Naive thymus-derived CD4-positive, alpha-beta T cell (primary cell): ENCODE measurements at regions of chr14 and their contacts with region 1.

Region 1: DNA sequence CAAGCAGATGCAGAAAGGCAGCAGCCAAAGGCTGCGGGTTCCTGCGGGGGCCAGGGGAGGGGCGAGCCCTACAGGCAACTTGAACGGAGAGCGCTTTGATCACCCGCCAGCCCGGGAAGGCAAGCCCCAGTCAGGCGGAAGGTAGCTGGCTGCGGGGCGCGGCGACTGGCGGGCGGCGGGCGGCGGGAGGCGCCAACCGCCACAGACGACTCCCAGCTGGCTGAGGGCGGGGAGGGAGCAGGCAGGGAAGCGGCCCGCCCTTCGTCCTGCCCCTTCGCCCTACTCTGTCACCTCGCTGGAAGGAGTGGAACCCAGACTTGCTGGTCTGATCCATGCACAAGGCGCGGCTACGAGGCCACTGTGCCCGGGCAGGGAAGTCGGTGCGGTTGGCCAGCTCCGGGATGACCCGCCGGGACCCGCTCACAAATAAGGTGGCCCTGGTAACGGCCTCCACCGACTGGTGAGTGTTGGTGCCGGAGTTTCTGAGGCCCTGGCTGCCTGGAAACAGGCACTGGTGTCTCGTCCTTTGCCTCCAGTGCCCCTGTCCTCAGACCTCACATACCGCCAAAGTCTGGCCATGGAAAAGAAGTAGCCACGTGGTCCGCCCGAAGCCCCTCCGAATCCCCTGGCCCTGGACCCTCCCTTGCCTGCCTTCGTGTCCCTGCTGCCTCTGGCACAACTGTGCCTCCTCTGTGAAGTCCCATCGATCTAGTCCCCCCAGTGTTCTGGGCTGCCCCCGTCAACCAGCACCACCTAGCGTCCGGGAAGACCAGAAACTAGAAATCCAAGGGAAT is 15.4 kb upstream of the CARMIL3 start:
- DNase-seq: peak; percentile 46 to 76 (median 63)
- ATAC-seq: peak; percentile 84
- H3K4me3 ChIP-seq: peak overlapping the region; percentile 80
- H3K4me3 Mint-ChIP-seq: peak overlapping the region; percentile 93 to 100 (median 96)
- H3K27ac ChIP-seq: peak overlapping the region; percentile 65
- H3K27ac Mint-ChIP-seq: peak overlapping the region; percentile 68 to 95 (median 88)
- H3K4me1 ChIP-seq: no peaks in the 10 kb centered on the region
- H3K4me1 Mint-ChIP-seq: peaks cover 6 to 16% (median 10%) of the 10 kb centered on the region in 7 donors
- H3K27me3 ChIP-seq: no peaks in the 10 kb centered on the region
- H3K27me3 Mint-ChIP-seq: peaks cover 0 to 3% (median 0%) of the 10 kb centered on the region in 5 donors

Region 2: DNA sequence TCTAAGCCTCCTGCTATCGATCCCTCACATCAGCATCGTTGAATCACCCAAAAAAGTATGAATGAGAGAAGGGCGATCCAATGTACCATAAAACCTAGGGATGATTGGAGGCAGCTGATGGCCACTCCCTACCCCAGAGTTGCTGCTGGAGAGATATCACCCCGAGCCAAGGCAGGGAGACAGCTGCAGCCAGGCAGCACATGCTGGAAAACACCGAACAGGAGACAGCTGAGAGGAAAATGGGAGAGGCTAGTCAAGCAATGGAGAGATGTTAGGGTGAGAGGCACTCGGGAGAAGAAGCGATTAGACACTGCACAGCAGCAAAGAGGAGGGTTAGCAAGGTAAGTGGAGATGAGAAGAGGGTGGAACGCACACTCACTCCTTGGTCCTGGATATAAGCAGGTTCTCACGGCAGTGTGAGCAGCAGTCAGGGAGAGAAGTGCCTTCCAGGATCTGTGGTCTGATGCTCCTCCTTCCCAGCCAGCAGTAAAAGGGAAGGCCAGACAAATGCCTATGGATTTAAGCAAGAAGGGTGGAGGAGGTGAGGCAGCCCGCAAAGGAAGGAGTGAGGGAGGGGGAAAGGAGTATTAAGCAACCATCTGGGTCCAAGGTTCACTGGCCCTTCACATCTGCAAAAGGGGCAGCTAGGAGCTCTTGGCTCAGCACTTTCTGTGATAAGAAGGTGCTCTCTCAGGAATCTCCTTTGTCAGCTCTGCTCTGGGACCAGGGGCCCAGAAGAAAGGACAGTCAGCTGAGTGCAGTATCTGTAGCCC is 1221.2 kb before region 1 on chr14 and contains the start of gene SLC7A7:
- CTCF ChIA-PET with region 1: no interaction called
- POLR2A ChIA-PET with region 1: no interaction called
- intact Hi-C with region 1: no loop called
- DNase-seq: no peak
- ATAC-seq: no peak
- H3K4me3 ChIP-seq: no peak within 1 kb of the TSS
- H3K4me3 Mint-ChIP-seq: peak within 1 kb of the TSS in 8 of 10 donors; percentile 13 to 63 (median 39)
- H3K27ac ChIP-seq: peak within 1 kb of the TSS; percentile 6
- H3K27ac Mint-ChIP-seq: peak within 1 kb of the TSS in 8 of 9 donors; percentile 34 to 82 (median 74)
- H3K4me1 ChIP-seq: peaks cover 0 to 12% of the 10 kb centered on the region in 2 donors
- H3K4me1 Mint-ChIP-seq: peaks cover 15 to 28% (median 18%) of the 10 kb centered on the region in 7 donors
- H3K27me3 ChIP-seq: no peaks in the 10 kb centered on the region
- H3K27me3 Mint-ChIP-seq: peaks cover 0 to 9% (median 0%) of the 10 kb centered on the region in 5 donors
- total RNA-seq, gene SLC7A7: 1.1 to 71.1 (median 2.7) TPM

Region 3: DNA sequence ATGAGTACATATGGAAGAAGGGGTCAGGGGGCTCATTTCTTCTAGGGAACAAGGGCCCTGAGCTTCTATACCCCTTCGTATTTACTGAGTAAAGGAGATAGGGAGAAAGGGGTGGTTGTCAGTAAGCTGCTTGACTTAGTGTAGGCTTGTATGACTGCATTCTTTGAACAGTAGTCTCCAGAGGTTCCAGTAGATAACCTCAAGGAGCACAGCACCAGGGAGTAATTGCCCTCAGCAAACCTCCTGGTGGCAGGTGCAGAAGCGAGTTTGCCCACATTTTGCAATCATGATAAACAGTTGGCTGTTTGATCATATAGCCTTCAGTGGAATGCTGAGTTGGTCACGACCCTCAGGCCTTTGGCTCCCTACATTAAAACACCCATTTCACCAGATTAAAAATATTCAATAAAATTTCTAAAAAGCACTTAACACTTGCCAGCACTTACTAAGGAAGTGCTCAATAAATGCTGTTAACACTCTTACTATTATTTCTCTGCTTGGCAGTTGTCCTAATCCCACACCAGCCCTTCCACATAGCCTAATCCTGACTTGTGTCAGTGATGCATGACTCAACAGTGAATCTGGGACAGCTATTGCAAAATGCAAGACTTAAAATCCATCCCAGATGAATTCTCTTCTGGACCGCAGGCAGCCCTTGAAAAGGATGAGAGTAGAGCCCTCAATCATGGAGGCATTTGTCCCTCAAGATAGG is 51.3 kb before region 1 on chr14:
- CTCF ChIA-PET with region 1: interaction called, 5 read pairs
- POLR2A ChIA-PET with region 1: no interaction called
- intact Hi-C with region 1: loop called (anchors 1 to 5 kb)
- DNase-seq: no peak
- ATAC-seq: no peak
- H3K4me3 ChIP-seq: no peak overlapping the region
- H3K4me3 Mint-ChIP-seq: no peak overlapping the region
- H3K27ac ChIP-seq: no peak overlapping the region
- H3K27ac Mint-ChIP-seq: peak overlapping the region in 2 of 9 donors; percentile 38 to 67
- H3K4me1 ChIP-seq: no peaks in the 10 kb centered on the region
- H3K4me1 Mint-ChIP-seq: peaks cover 7 to 32% (median 22%) of the 10 kb centered on the region in 7 donors
- H3K27me3 ChIP-seq: no peaks in the 10 kb centered on the region
- H3K27me3 Mint-ChIP-seq: no peaks in the 10 kb centered on the region

Region 4: GRCh38 chr14:24013654-24014514 is 22.5 kb before region 1 on chr14:
- CTCF ChIA-PET with region 1: no interaction called
- POLR2A ChIA-PET with region 1: no interaction called
- intact Hi-C with region 1: loop called (anchors 1 kb)
- DNase-seq: peak in 8 of 9 donors; percentile 17 to 76 (median 67)
- ATAC-seq: peak; percentile 94
- H3K4me3 ChIP-seq: no peak overlapping the region
- H3K4me3 Mint-ChIP-seq: no peak overlapping the region
- H3K27ac ChIP-seq: no peak overlapping the region
- H3K27ac Mint-ChIP-seq: no peak overlapping the region
- H3K4me1 ChIP-seq: peaks cover 0 to 6% of the 10 kb centered on the region in 2 donors
- H3K4me1 Mint-ChIP-seq: peaks cover 8 to 28% (median 25%) of the 10 kb centered on the region in 7 donors
- H3K27me3 ChIP-seq: no peaks in the 10 kb centered on the region
- H3K27me3 Mint-ChIP-seq: peaks cover 0 to 15% (median 0%) of the 10 kb centered on the region in 5 donors

Region 5: GRCh38 chr14:24051789-24052655 is 15.7 kb after region 1 on chr14 and contains the start of gene CARMIL3:
- CTCF ChIA-PET with region 1: interaction called, 3 read pairs
- POLR2A ChIA-PET with region 1: no interaction called
- intact Hi-C with region 1: loop called in 1 of 2 experiments (anchors 1 kb)
- DNase-seq: peak; percentile 28 to 78 (median 47)
- ATAC-seq: peak; percentile 79
- H3K4me3 ChIP-seq: peak within 1 kb of the TSS; percentile 63
- H3K4me3 Mint-ChIP-seq: peak within 1 kb of the TSS; percentile 81 to 91 (median 87)
- H3K27ac ChIP-seq: peak within 1 kb of the TSS; percentile 53
- H3K27ac Mint-ChIP-seq: peak within 1 kb of the TSS in 6 of 9 donors; percentile 46 to 67 (median 56)
- H3K4me1 ChIP-seq: peaks cover 0 to 8% of the 10 kb centered on the region in 2 donors
- H3K4me1 Mint-ChIP-seq: peaks cover 8 to 17% (median 14%) of the 10 kb centered on the region in 7 donors
- H3K27me3 ChIP-seq: no peaks in the 10 kb centered on the region
- H3K27me3 Mint-ChIP-seq: peaks cover 12 to 44% (median 19%) of the 10 kb centered on the region in 5 donors
- total RNA-seq, gene CARMIL3: 0.08 to 1.7 (median 0.27) TPM